OCI-LY7 (cell line): ENCODE measurements at regions of chr9 and their contacts with region 1.

Region 1: GRCh38 chr9:113173341-113173740 is 22.5 kb downstream of the SLC31A2 start:
- DNase-seq: no peak
- H3K4me3 ChIP-seq: no peak overlapping the region
- H3K27ac ChIP-seq: no peak overlapping the region
- H3K4me1 ChIP-seq: no peaks in the 10 kb centered on the region
- CTCF ChIP-seq: no peak

Region 2: GRCh38 chr9:113205432-113205831 is 32.1 kb after region 1 on chr9:
- CTCF ChIA-PET with region 1: no interaction called
- POLR2A ChIA-PET with region 1: interaction called, 4 read pairs
- intact Hi-C with region 1: loop called (anchors 5 kb)
- DNase-seq: no peak
- H3K4me3 ChIP-seq: no peak overlapping the region
- H3K27ac ChIP-seq: no peak overlapping the region
- H3K4me1 ChIP-seq: no peaks in the 10 kb centered on the region
- CTCF ChIP-seq: no peak